ENCODE measurements at regions of chr20 and their contacts with region 1.

Region 1: GRCh38 chr20:13336308-13337089 is 115.4 kb downstream of the ISM1 start:
- DNase-seq: peak; percentile 60
- H3K4me3 Mint-ChIP-seq: peak overlapping the region; percentile 41
- H3K27ac Mint-ChIP-seq: peak overlapping the region; percentile 80
- H3K4me1 Mint-ChIP-seq: peaks cover 69% of the 10 kb centered on the region
- H3K27me3 Mint-ChIP-seq: no peaks in the 10 kb centered on the region
- CTCF ChIP-seq: no peak

Region 2: GRCh38 chr20:13492001-13492481 is 155.5 kb after region 1 on chr20:
- CTCF ChIA-PET with region 1: no interaction called
- intact Hi-C with region 1: loop called (anchors 1 kb)
- DNase-seq: peak; percentile 18
- H3K4me3 Mint-ChIP-seq: no peak overlapping the region
- H3K27ac Mint-ChIP-seq: no peak overlapping the region
- H3K4me1 Mint-ChIP-seq: no peaks in the 10 kb centered on the region
- H3K27me3 Mint-ChIP-seq: no peaks in the 10 kb centered on the region
- CTCF ChIP-seq: no peak